Activated B cell treated with CpG ODN at 0.5 μM for 24 hours (primary cell): ENCODE measurements at regions of chr1 and their contacts with region 1.

Region 1: DNA sequence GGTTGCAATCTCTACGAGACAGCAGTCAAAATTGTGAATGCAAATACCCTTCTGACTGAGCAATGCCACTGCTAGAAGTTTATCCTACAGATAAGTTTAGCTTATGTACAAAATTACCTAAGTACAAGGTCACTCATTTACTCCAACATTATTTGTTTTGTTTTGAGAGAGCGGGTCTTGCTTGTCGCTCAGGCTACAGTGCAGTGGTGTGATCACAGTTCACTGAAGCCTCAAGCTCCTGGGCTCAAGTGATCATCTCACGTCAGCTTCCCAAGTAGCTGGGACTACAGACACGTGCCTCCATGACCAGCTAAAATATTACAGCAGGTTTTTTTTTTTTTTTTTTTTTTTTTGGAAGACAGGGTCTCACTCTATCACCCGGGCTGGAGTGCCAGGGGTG is 15.4 kb downstream of the RBM34 start:
- DNase-seq: no peak
- ATAC-seq: no peak
- H3K4me3 Mint-ChIP-seq: no peak overlapping the region
- H3K27ac Mint-ChIP-seq: no peak overlapping the region
- H3K4me1 Mint-ChIP-seq: peaks cover 10% of the 10 kb centered on the region
- H3K27me3 Mint-ChIP-seq: no peaks in the 10 kb centered on the region
- CTCF ChIP-seq: no peak

Region 2: DNA sequence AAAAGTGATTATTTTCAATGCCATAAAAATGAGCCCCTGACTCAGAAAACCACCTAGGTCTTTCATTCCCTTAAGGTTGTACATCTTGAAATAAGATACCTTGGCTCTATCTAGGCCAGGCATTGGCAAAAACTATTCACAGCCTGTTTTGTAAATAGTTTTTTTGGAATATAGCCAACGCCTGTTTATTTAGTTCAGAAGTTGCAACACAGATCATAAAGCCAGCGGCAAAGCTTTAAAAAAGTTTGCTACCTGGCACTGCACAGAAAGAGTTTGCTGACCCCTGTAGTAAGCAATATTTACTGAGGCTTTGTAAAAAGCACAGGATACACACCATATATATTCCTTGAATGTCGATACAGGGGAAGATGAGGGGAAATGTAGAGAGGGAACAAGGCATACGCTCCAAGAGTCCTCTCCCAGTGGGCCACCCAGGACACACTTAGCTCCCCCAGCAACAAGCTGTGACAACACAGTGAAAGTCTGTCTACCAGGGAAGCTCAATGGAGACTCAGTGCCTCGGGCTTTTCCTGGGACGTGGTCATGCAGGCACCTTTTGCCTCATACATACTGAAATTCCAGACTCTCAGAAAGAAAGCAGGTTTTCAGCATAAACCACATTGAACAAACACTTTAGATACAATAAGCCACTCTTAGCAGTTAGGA is 687.2 kb before region 1 on chr1:
- CTCF ChIA-PET with region 1: no interaction called
- POLR2A ChIA-PET with region 1: interaction called, 16 read pairs
- intact Hi-C with region 1: no loop called
- DNase-seq: no peak
- ATAC-seq: no peak
- H3K4me3 Mint-ChIP-seq: no peak overlapping the region
- H3K27ac Mint-ChIP-seq: no peak overlapping the region
- H3K4me1 Mint-ChIP-seq: no peaks in the 10 kb centered on the region
- H3K27me3 Mint-ChIP-seq: no peaks in the 10 kb centered on the region
- CTCF ChIP-seq: no peak